Calu3 (cell line): ENCODE measurements at regions of chr19 and their contacts with region 1.

Region 1: GRCh38 chr19:48152551-48152950 is 17.6 kb downstream of the LIG1 start:
- DNase-seq: peak; percentile 67
- H3K4me3 Mint-ChIP-seq: no peak overlapping the region
- H3K27ac Mint-ChIP-seq: no peak overlapping the region
- H3K4me1 Mint-ChIP-seq: no peaks in the 10 kb centered on the region
- H3K27me3 Mint-ChIP-seq: no peaks in the 10 kb centered on the region
- CTCF ChIP-seq: peak; percentile 94

Region 2: DNA sequence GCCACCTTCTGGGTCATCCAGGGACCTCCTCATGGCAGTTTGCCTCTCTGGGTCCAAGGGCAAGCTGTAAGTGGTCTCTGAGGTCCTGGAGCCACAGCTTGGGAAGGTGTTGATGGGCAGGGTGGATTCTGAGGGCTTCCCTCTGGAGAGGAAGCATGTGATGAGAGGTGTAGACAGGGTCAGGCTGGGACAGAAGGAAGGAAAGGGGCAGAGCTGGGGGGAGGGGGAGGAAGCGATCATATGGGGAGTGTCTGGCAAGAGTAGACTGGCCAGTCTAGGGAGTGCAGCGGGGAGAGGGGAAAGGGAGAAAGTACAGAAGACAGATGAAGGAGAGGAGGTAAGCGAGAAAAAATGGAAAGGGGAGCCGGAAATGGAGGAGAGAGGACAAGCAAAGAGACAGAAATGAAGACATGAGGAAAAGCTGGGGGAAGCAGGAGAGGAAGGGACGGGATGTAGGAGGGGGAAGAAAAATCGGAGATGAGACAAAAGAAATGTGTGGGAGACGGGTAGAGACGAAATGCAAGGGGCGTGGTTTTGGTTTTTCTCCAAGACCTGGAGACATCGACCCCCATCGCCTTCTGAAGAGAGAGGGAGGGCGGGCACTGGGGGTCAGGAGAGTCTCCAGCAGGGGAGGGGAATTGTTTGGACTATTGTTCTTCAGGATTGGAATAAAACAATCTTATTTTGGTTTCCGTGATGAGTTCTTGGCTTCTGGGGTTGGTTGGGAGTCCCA is 44.5 kb after region 1 on chr19:
- CTCF ChIA-PET with region 1: interaction called, 10 read pairs
- intact Hi-C with region 1: no loop called
- DNase-seq: no peak
- H3K4me3 Mint-ChIP-seq: no peak overlapping the region
- H3K27ac Mint-ChIP-seq: no peak overlapping the region
- H3K4me1 Mint-ChIP-seq: no peaks in the 10 kb centered on the region
- H3K27me3 Mint-ChIP-seq: no peaks in the 10 kb centered on the region
- CTCF ChIP-seq: no peak